Psoas muscle (tissue), 8 donors: ENCODE measurements at regions of chr20 and their contacts with region 1.

Region 1: DNA sequence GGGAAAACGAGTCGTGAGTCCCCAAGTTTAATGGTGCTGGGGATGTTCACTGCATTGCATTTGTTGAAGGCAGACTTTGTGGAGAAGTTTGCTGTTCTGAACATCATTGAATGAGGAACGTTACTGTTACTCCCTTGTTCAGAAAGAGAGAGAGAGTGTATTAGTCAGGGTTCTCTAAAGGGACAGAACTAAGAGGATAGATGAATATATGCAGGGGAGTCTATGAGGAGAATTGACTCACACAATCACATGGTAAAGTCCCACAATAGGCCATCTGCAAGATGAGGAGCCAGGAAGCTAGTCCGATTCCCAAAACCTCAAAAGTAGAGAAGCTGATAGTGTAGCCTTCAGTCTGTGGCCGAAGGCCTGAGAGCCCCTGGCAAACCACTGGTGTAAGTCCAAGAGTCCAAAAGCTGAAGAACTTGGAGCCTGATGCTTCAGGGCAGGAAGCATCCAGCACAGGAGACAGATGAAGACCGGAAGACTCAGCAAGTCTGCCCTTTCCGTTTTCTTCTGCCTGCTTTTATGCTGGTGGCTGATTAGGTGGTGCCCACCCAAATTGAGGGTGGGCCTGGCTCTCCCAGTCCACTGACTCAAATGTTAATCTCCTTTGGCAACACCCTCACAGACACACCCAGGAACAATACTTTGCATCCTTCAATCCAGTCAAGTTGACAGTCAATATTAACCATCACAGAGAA is 223.5 kb upstream of the PCSK2 start:
- DNase-seq: no peak
- ATAC-seq: no peak
- H3K4me3 ChIP-seq: no peak overlapping the region
- H3K27ac ChIP-seq: no peak overlapping the region
- H3K4me1 ChIP-seq: no peaks in the 10 kb centered on the region
- H3K27me3 ChIP-seq: no peaks in the 10 kb centered on the region
- CTCF ChIP-seq: no peak

Region 2: GRCh38 chr20:16942756-16943155 is 60.6 kb before region 1 on chr20:
- intact Hi-C with region 1: loop called in 1 of 2 experiments (anchors 10 kb)
- DNase-seq: no peak
- ATAC-seq: no peak
- H3K4me3 ChIP-seq: no peak overlapping the region
- H3K27ac ChIP-seq: no peak overlapping the region
- H3K4me1 ChIP-seq: no peaks in the 10 kb centered on the region
- H3K27me3 ChIP-seq: no peaks in the 10 kb centered on the region
- CTCF ChIP-seq: no peak

Region 3: GRCh38 chr20:17014217-17014616 is 10.9 kb after region 1 on chr20:
- intact Hi-C with region 1: no loop called
- DNase-seq: no peak
- ATAC-seq: no peak
- H3K4me3 ChIP-seq: no peak overlapping the region
- H3K27ac ChIP-seq: no peak overlapping the region
- H3K4me1 ChIP-seq: no peaks in the 10 kb centered on the region
- H3K27me3 ChIP-seq: no peaks in the 10 kb centered on the region
- CTCF ChIP-seq: no peak